Calu3 (cell line): ENCODE measurements at regions of chr1 and their contacts with region 1.

Region 1: DNA sequence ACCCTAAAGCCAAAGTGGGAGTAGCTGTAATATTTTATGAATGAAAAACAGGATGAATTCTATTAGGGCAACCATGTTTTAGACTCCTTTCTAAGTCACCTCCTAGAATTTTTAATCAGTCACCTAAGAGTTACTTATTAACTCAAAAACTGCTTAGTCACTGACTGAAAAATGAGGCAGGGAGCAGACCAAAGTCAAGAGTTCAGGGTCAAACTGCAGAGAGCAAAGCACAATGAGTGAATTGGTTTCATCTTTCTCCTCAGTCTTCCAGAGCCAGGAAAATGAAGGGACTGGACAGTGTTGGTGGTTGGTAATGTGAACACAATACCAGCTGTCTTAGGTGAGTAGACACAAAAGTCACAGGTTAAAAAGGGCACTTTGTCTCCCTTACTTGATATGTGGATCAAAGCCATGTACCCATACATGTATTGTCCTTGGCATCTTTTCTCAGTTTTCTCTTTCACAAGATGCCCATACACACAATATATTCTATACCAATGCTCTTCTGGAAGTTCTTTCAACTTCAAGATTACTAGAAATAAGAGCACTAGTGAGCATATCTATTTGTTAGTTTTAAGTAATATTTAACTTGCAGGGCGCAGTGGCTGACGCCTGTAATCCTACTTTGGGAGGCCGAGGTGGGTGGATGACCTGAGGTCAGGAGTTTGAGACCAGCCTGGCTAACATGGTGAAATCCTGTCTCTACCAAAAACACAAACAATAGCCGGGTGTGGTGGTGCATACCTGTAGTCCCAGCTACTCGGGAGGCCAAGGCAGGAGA is 42.2 kb downstream of the ATP1B1 start:
- DNase-seq: peak; percentile 26
- H3K4me3 Mint-ChIP-seq: peak overlapping the region; percentile 39
- H3K27ac Mint-ChIP-seq: peak overlapping the region; percentile 74
- H3K4me1 Mint-ChIP-seq: peaks cover 48% of the 10 kb centered on the region
- H3K27me3 Mint-ChIP-seq: no peaks in the 10 kb centered on the region
- CTCF ChIP-seq: no peak

Region 2: GRCh38 chr1:169044971-169045370 is 103.7 kb before region 1 on chr1:
- CTCF ChIA-PET with region 1: no interaction called
- intact Hi-C with region 1: no loop called
- DNase-seq: no peak
- H3K4me3 Mint-ChIP-seq: no peak overlapping the region
- H3K27ac Mint-ChIP-seq: no peak overlapping the region
- H3K4me1 Mint-ChIP-seq: peaks cover 50% of the 10 kb centered on the region
- H3K27me3 Mint-ChIP-seq: no peaks in the 10 kb centered on the region
- CTCF ChIP-seq: no peak

Region 3: GRCh38 chr1:169115891-169116585 is 32.6 kb before region 1 on chr1:
- CTCF ChIA-PET with region 1: interaction called, 3 read pairs
- intact Hi-C with region 1: loop called (anchors 2 kb)
- DNase-seq: peak; percentile 96
- H3K4me3 Mint-ChIP-seq: peak overlapping the region; percentile 60
- H3K27ac Mint-ChIP-seq: peak overlapping the region; percentile 99
- H3K4me1 Mint-ChIP-seq: peaks cover 93% of the 10 kb centered on the region
- H3K27me3 Mint-ChIP-seq: no peaks in the 10 kb centered on the region
- CTCF ChIP-seq: no peak

Region 4: DNA sequence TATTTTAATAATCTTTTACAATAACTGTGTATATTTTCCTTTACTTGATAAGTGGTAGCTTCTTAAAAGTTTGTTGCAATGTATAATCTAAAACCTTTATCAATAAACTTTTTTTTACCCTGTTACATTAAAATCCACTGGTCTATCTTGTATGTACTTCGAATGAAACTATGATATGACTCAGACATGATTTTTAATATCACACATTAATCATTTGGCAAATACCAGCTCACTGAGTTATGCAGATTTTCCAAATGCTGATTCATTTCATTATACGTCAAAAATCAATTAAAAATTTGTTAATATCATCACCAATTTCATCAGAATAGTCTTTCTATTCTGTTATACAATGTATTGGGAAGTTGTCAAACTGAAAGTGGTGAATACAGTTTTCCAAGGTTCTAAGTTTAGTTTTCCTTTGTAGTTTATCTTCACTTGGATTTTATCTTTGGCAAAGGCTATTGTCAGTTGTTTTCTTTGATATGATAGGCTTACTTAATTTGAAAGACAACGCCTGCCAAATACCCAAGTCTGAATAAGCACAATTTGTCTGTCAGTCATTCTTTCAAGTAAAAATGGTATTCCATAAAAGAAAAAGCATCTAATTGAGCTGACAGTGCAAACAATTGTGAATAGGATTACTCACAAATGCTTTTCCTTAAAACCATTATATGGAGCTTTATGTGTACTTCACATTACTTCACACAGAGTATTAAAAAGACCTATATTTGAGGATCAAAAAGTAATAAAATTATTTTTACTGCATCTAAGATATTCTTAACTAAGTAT is 92.0 kb after region 1 on chr1:
- CTCF ChIA-PET with region 1: no interaction called
- intact Hi-C with region 1: loop called (anchors 1 kb)
- DNase-seq: no peak
- H3K4me3 Mint-ChIP-seq: no peak overlapping the region
- H3K27ac Mint-ChIP-seq: peak overlapping the region; percentile 36
- H3K4me1 Mint-ChIP-seq: peaks cover 8% of the 10 kb centered on the region
- H3K27me3 Mint-ChIP-seq: no peaks in the 10 kb centered on the region
- CTCF ChIP-seq: no peak

Region 5: DNA sequence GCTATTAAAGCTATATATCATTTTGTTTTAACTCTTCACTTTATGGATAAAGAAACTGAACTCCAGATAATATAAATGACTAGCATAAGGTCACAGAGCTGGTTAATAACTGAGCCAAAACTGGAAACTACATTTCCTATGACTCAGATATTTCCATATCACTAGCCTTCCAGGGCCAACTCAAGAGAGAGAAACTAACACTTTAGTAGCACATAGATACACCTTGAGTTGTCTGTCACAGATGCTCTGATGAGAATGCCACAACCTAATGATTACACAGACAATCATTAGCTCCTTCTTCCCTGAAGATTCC is 178.2 kb after region 1 on chr1:
- CTCF ChIA-PET with region 1: no interaction called
- intact Hi-C with region 1: loop called (anchors 10 kb)
- DNase-seq: no peak
- H3K4me3 Mint-ChIP-seq: peak overlapping the region; percentile 39
- H3K27ac Mint-ChIP-seq: peak overlapping the region; percentile 53
- H3K4me1 Mint-ChIP-seq: peaks cover 38% of the 10 kb centered on the region
- H3K27me3 Mint-ChIP-seq: no peaks in the 10 kb centered on the region
- CTCF ChIP-seq: no peak

Region 6: GRCh38 chr1:169390303-169390702 is 241.6 kb after region 1 on chr1:
- CTCF ChIA-PET with region 1: interaction called, 10 read pairs
- intact Hi-C with region 1: no loop called
- DNase-seq: no peak
- H3K4me3 Mint-ChIP-seq: no peak overlapping the region
- H3K27ac Mint-ChIP-seq: no peak overlapping the region
- H3K4me1 Mint-ChIP-seq: peaks cover 10% of the 10 kb centered on the region
- H3K27me3 Mint-ChIP-seq: no peaks in the 10 kb centered on the region
- CTCF ChIP-seq: no peak